ENCODE measurements at regions of chr11 and their contacts with region 1.

Region 1: GRCh38 chr11:66386171-66387069 is 14.9 kb upstream of the SLC29A2 start:
- DNase-seq: peak; percentile 80
- ATAC-seq: peak; percentile 90
- H3K4me3 ChIP-seq: peak overlapping the region; percentile 23; the same call in 1 of the 2 replicates
- H3K27ac ChIP-seq: no peak overlapping the region
- H3K4me1 ChIP-seq: no peaks in the 10 kb centered on the region
- H3K27me3 ChIP-seq: peaks cover 7% of the 10 kb centered on the region
- CTCF ChIP-seq: peak; percentile 90
- POLR2A ChIP-seq: no peak
- RAD21 ChIP-seq: peak; percentile 67

Region 2: DNA sequence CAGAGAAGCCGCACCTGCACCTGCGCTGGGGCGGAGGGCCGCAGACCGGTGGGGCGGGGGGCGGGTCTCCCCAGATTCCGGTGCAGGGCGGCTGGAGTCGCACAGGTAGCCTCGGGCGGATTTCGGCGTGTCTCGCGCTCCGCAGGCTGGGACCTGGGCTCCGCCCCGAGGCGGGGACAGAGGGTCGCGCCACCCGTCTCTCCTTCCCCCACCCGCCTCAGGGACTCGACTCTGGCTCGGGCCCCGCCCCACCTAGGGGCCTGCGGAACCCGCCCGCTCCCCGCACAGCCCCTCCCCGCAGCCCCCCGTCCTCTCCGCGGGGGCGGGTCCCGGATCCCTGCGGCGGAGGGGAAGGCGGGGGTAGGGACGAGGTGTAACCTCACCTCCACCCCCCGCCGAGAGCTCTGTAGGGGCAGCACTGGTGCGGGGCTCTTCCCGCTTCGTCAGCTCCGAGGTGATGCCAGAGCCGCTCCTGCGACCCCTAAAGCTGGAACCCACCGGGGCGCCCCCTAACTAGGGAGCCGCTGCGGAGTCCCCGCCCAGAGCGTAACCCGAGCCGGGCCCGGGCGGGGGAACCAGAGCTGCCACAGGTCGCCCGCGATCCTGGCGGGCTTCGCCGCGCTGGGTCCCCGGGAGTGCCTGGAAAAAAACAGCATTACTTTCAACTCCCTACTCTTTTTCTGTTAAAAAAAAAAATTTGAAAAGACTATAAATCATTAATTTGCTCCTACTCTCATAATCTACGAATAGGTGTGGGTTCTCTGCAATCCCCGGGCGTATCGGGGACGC is 14.6 kb before region 1 on chr11 and contains the start of gene SLC29A2:
- CTCF ChIA-PET with region 1: interaction called, 11 read pairs
- POLR2A ChIA-PET with region 1: no interaction called
- dilution Hi-C with region 1: no loop called
- in situ Hi-C with region 1: no loop called
- intact Hi-C with region 1: no loop called
- DNase-seq: no peak
- ATAC-seq: peak; percentile 57
- H3K4me3 ChIP-seq: peak within 1 kb of the TSS; percentile 61
- H3K27ac ChIP-seq: no peak within 1 kb of the TSS
- H3K4me1 ChIP-seq: peaks cover 7% of the 10 kb centered on the region
- H3K27me3 ChIP-seq: peaks cover 16% of the 10 kb centered on the region
- CTCF ChIP-seq: no peak
- POLR2A ChIP-seq: no peak
- RAD21 ChIP-seq: no peak
- total RNA-seq, gene SLC29A2: under 0.01 TPM in 2 replicates

Region 3: GRCh38 chr11:66429983-66430602 is 43.7 kb after region 1 on chr11:
- CTCF ChIA-PET with region 1: interaction called, 4 read pairs
- POLR2A ChIA-PET with region 1: no interaction called
- dilution Hi-C with region 1: no loop called
- in situ Hi-C with region 1: no loop called
- intact Hi-C with region 1: loop called (anchors 5 kb)
- DNase-seq: peak; percentile 67
- ATAC-seq: peak; percentile 98
- H3K4me3 ChIP-seq: no peak overlapping the region
- H3K27ac ChIP-seq: no peak overlapping the region
- H3K4me1 ChIP-seq: no peaks in the 10 kb centered on the region
- H3K27me3 ChIP-seq: no peaks in the 10 kb centered on the region
- CTCF ChIP-seq: peak; percentile 90
- POLR2A ChIP-seq: no peak
- RAD21 ChIP-seq: peak; percentile 93

Region 4: DNA sequence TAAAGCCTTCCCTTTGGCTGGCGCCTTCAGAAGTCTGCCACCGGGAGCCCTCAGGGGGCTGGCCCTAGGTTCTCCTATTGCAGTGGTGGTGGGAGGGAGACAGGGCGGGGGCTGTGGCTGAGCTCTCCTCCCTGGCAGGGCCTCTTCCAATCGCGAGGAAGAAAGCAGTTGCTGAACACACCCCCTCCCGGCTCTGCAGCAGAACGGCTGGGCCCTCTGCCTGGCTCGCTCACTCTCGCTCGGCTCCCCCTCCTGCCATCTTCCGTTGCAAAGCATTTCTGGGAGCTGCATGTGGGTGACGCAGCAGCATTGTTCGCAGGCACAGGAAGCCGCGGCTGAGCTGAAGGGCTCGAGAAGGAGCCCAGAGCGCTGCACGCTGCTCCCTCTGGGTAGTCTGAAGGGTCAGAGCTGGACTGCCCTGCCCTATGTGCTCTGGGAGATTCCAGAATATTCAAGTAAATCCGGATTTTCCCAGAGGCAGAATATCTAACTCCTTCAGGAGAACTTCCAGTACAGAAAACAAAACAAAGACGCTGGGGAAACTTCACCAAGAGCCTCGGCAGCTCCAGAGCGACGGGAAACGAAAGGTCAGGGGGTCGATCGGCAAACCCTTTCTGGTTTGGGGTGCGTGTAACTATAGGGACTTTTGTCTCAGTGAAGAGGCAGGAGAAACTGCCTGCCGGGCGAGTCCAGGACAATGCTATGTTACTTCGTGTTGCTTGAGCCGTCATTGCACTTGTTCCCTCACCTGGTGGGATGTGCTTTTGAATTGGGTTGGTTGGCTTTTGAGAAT is 853.6 kb after region 1 on chr11:
- CTCF ChIA-PET with region 1: no interaction called
- POLR2A ChIA-PET with region 1: no interaction called
- dilution Hi-C with region 1: no loop called
- in situ Hi-C with region 1: no loop called
- intact Hi-C with region 1: no loop called
- DNase-seq: peak; percentile 99
- ATAC-seq: peak; percentile 97
- H3K4me3 ChIP-seq: peak overlapping the region; percentile 67
- H3K27ac ChIP-seq: peak overlapping the region; percentile 90
- H3K4me1 ChIP-seq: peaks cover 13% of the 10 kb centered on the region
- H3K27me3 ChIP-seq: no peaks in the 10 kb centered on the region
- CTCF ChIP-seq: no peak
- POLR2A ChIP-seq: peak; percentile 97
- RAD21 ChIP-seq: no peak